Mammary epithelial cell (primary cell): ENCODE measurements at regions of chr2 and their contacts with region 1.

Region 1: DNA sequence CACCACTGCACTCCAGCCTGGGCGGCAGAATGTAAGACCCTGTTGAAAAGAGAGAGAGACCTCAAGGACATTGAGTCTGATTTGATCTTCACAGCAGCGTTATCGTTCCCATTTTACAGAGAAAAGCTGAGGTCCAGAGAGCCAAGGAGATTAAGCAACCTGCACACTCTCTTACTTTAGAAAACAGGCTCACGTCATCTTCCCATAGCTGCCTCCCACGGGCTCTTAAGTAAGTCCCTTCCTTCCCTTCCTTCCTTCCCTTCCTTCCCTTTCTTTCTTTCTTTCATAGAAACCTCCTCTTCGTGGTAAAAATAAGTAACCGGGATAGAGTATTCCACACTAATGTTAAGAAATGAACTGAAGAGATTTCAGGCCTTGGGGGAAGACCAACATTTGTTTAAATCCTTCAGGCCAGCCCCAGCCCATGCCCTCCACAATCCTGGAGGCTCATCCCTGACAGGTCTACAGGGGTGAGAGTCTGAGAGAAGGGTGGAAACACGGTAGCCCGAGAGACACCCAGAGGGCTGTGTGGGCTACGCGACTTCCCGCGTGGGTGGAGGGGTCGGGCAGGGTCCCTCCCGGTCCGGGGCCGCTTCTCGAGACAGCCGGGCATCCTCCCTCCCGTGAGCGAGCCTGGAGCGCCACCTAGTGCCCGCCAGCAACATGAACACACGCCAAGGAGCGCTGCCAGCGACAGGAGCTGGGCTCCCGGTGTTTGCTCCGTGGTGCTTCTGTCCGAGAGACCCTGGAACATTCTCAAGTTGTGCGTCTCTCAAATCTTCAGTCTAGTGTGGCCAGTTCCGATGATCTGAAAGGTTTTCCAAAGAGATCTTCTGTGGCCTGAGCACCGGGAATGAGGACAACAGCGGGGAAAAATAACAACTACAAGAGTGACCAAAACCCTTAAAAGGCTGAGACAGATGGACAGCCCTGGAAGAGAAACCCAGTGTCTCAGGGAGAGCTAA is 160.3 kb downstream of the INO80D start:
- DNase-seq: peak; percentile 48
- H3K4me3 ChIP-seq: peak overlapping the region; percentile 6 to 44 (median 27)
- H3K27ac ChIP-seq: no peak overlapping the region
- H3K4me1 ChIP-seq: peaks cover 9% of the 10 kb centered on the region
- H3K27me3 ChIP-seq: peaks cover 3% of the 10 kb centered on the region
- CTCF ChIP-seq: peak; percentile 64 to 98

Region 2: GRCh38 chr2:204325468-204325867 is 1600.2 kb before region 1 on chr2:
- CTCF ChIA-PET with region 1: no interaction called
- dilution Hi-C with region 1: no loop called
- in situ Hi-C with region 1: no loop called
- intact Hi-C with region 1: loop called (anchors 1 kb)
- DNase-seq: peak; percentile 59
- H3K4me3 ChIP-seq: no peak overlapping the region
- H3K27ac ChIP-seq: no peak overlapping the region
- H3K4me1 ChIP-seq: no peaks in the 10 kb centered on the region
- H3K27me3 ChIP-seq: no peaks in the 10 kb centered on the region
- CTCF ChIP-seq: peak; percentile 78 to 80

Region 3: GRCh38 chr2:205323929-205324328 is 601.7 kb before region 1 on chr2:
- CTCF ChIA-PET with region 1: interaction called, 5 read pairs
- dilution Hi-C with region 1: no loop called
- in situ Hi-C with region 1: loop called in 1 of 2 experiments (anchors 10 kb)
- intact Hi-C with region 1: loop called (anchors 1 kb)
- DNase-seq: peak; percentile 4
- H3K4me3 ChIP-seq: no peak overlapping the region
- H3K27ac ChIP-seq: no peak overlapping the region
- H3K4me1 ChIP-seq: no peaks in the 10 kb centered on the region
- H3K27me3 ChIP-seq: no peaks in the 10 kb centered on the region
- CTCF ChIP-seq: peak; percentile 78 to 87

Region 4: GRCh38 chr2:205766779-205767359 is 158.8 kb before region 1 on chr2:
- CTCF ChIA-PET with region 1: no interaction called
- dilution Hi-C with region 1: no loop called
- in situ Hi-C with region 1: no loop called
- intact Hi-C with region 1: loop called (anchors 1 kb)
- DNase-seq: peak; percentile 43
- H3K4me3 ChIP-seq: no peak overlapping the region
- H3K27ac ChIP-seq: peak overlapping the region; percentile 25
- H3K4me1 ChIP-seq: peaks cover 44% of the 10 kb centered on the region
- H3K27me3 ChIP-seq: no peaks in the 10 kb centered on the region
- CTCF ChIP-seq: peak; percentile 92 to 95

Region 5: GRCh38 chr2:205822578-205822977 is 103.1 kb before region 1 on chr2:
- CTCF ChIA-PET with region 1: no interaction called
- dilution Hi-C with region 1: no loop called
- in situ Hi-C with region 1: no loop called
- intact Hi-C with region 1: no loop called
- DNase-seq: peak; percentile 75
- H3K4me3 ChIP-seq: no peak overlapping the region
- H3K27ac ChIP-seq: no peak overlapping the region
- H3K4me1 ChIP-seq: peaks cover 5% of the 10 kb centered on the region
- H3K27me3 ChIP-seq: no peaks in the 10 kb centered on the region
- CTCF ChIP-seq: no peak

Region 6: DNA sequence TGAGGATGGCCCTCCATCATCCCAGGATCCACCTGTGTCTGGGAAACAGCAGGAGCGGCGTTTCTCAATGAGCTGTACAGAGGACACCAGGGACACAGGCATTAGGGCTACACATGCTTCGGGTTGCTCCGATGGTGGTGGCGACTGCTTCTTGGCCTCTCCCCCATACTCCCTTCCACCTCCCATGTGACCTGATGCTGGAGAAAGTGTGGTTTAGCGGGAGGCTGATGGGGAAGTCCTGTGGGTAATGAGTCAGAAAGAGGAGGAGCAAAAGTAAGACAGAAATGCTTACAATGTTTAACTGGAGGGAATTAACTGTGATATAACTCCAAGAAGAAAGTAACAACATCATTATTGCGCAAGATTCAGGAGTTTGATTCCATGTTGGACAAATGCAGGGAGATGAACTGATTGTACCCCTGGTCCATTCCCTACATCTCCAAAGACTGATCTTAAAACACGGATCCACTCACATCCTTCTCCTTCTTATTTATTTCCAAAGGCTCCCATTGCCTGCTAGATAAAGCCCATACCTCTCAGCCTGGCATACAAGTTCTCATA is 56.8 kb before region 1 on chr2:
- CTCF ChIA-PET with region 1: no interaction called
- dilution Hi-C with region 1: no loop called
- in situ Hi-C with region 1: no loop called
- intact Hi-C with region 1: no loop called
- DNase-seq: peak; percentile 72
- H3K4me3 ChIP-seq: no peak overlapping the region
- H3K27ac ChIP-seq: no peak overlapping the region
- H3K4me1 ChIP-seq: peaks cover 17% of the 10 kb centered on the region
- H3K27me3 ChIP-seq: no peaks in the 10 kb centered on the region
- CTCF ChIP-seq: no peak

Region 7: DNA sequence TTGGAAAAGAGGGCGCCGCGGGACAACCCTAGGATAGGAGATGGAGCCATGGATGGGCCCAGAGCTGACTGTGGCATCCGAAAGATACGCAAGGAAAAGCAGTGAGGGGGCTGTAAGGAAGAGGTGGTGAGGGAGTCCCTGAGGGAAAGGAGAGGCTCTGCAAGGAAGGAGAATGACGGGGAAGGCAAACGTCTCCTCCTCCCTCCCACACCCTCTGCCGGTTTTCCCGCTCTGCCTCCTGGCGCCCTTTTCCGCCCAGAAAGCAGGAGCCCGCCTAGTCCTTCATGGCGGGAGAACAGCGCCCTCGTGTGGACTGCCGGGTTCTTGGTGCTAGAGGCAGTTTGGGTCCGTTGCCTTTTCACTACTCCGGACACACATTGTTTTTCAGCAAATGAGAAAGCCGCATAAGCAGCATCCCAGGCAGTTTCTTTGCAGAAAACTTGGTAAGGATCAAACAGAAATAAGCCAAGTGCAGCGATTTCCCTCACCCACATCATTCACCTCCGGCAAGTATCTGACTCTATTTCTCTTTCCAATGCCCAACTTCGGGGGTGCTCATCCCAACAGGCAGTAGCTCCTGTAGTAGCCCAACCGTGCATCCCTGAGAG is 40.1 kb before region 1 on chr2:
- CTCF ChIA-PET with region 1: no interaction called
- dilution Hi-C with region 1: no loop called
- in situ Hi-C with region 1: no loop called
- intact Hi-C with region 1: loop called (anchors 2 kb)
- DNase-seq: peak; percentile 65
- H3K4me3 ChIP-seq: no peak overlapping the region
- H3K27ac ChIP-seq: no peak overlapping the region
- H3K4me1 ChIP-seq: peaks cover 17% of the 10 kb centered on the region
- H3K27me3 ChIP-seq: no peaks in the 10 kb centered on the region
- CTCF ChIP-seq: peak; percentile 63 to 72

Region 8: GRCh38 chr2:205957452-205958154 is 31.9 kb after region 1 on chr2:
- CTCF ChIA-PET with region 1: no interaction called
- dilution Hi-C with region 1: no loop called
- in situ Hi-C with region 1: no loop called
- intact Hi-C with region 1: no loop called
- DNase-seq: no peak
- H3K4me3 ChIP-seq: no peak overlapping the region
- H3K27ac ChIP-seq: no peak overlapping the region
- H3K4me1 ChIP-seq: no peaks in the 10 kb centered on the region
- H3K27me3 ChIP-seq: no peaks in the 10 kb centered on the region
- CTCF ChIP-seq: no peak